CD4-positive, alpha-beta T cell (primary cell): ENCODE measurements at regions of chr5 and their contacts with region 1.

Region 1: GRCh38 chr5:90386099-90386710 is 23.4 kb downstream of the CETN3 start:
- DNase-seq: peak in 3 of 14 experiments; percentile 11 to 19 (median 18)
- ATAC-seq: no peak
- H3K4me3 ChIP-seq: no peak overlapping the region
- H3K4me3 Mint-ChIP-seq: no peak overlapping the region
- H3K27ac ChIP-seq: no peak overlapping the region
- H3K27ac Mint-ChIP-seq: no peak overlapping the region
- H3K4me1 ChIP-seq: no peaks in the 10 kb centered on the region
- H3K4me1 Mint-ChIP-seq: peaks cover 14% of the 10 kb centered on the region
- H3K27me3 ChIP-seq: no peaks in the 10 kb centered on the region
- H3K27me3 Mint-ChIP-seq: peaks cover 5% of the 10 kb centered on the region
- CTCF ChIP-seq: peak; percentile 65

Region 2: DNA sequence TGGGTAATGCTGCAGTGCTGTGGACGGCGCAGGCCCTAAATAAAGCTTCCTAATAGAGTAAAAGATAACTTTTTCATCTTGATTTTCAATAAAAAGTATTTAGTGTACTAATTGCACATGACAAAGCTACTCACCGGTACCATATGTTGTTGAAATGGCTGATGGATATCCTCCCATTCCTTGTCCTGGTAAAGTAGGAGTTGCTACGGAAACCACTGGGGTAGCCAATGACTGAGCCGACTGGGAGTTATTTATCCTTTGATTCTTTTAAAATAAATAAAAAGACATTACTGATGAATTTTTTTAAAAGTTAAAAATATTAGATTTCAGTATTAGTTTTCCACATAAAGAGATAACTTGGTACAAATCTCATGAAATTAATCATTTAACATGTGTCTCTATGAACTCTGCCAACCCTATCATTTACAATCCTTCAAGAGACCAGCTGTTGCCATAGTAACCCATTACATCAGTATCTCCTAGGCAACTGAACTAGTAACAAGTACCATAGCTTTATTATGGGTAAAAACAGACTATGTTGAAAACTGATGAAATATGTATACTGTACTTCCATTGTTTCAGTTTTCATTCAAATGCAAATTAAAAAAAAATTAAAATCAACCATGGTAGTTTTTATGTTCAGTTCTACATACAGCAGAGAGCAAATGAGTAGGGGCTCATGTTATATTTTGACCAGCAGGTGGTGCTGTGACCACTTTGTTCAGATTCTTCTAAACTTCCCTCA is 1656.9 kb before region 1 on chr5:
- CTCF ChIA-PET with region 1: interaction called, 3 read pairs
- POLR2A ChIA-PET with region 1: no interaction called
- intact Hi-C with region 1: loop called in 1 of 2 experiments (anchors 1 kb)
- DNase-seq: peak in 13 of 14 experiments; percentile 7 to 79 (median 25)
- ATAC-seq: peak; percentile 83
- H3K4me3 ChIP-seq: no peak overlapping the region
- H3K4me3 Mint-ChIP-seq: no peak overlapping the region
- H3K27ac ChIP-seq: no peak overlapping the region
- H3K27ac Mint-ChIP-seq: no peak overlapping the region
- H3K4me1 ChIP-seq: no peaks in the 10 kb centered on the region
- H3K4me1 Mint-ChIP-seq: peaks cover 4% of the 10 kb centered on the region
- H3K27me3 ChIP-seq: peaks cover 1 to 7% of the 10 kb centered on the region in 2 experiments
- H3K27me3 Mint-ChIP-seq: peaks cover 26% of the 10 kb centered on the region
- CTCF ChIP-seq: peak; percentile 79